ENCODE measurements at regions of chr1 and their contacts with region 1.

Region 1: GRCh38 chr1:158035976-158036583 is 42.6 kb downstream of the KIRREL1 start:
- DNase-seq: peak; percentile 56
- H3K4me3 Mint-ChIP-seq: no peak overlapping the region
- H3K27ac Mint-ChIP-seq: no peak overlapping the region
- H3K4me1 Mint-ChIP-seq: no peaks in the 10 kb centered on the region
- H3K27me3 Mint-ChIP-seq: no peaks in the 10 kb centered on the region

Region 2: DNA sequence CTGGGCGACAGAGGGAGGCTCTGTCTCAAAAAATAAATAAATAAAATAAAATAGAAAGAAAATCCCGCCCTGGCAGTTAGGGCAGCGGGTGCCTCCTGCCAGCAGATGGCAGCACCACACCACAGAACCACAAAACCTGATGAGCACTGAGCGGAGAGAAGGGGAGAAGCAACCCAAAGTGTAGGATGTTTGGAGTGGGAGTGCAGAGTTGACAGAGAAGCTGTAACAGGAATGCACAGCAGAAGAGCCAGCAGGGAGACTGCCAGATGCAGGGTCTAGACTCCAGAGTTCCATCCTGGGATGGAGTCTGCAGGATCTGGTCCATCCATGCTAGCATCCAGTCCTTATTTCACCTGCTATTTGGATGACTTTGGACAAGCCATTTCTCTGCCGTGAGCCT is 72.4 kb before region 1 on chr1:
- intact Hi-C with region 1: loop called (anchors 5 kb)
- DNase-seq: peak; percentile 83
- H3K4me3 Mint-ChIP-seq: no peak overlapping the region
- H3K27ac Mint-ChIP-seq: no peak overlapping the region
- H3K4me1 Mint-ChIP-seq: no peaks in the 10 kb centered on the region
- H3K27me3 Mint-ChIP-seq: peaks cover 3% of the 10 kb centered on the region

Region 3: DNA sequence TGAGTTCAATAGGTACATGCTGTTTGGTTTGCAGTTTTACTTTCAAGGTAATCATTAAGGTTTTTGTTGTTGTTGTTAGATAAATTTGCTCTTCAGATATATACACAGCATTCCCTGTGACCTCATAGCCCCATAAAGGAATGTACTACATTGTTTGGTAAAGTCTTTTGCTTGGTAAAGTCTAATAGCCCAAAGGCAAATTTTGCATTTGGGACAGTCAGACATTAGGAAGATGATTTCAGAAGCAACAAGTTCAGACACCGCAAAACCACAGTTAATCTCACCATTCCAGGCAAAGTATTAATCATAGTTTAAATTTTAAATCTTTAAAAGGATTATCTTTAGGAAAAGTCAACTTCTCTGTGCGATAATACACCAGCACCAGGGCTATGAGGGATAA is 862.6 kb after region 1 on chr1:
- intact Hi-C with region 1: no loop called
- DNase-seq: no peak
- H3K4me3 Mint-ChIP-seq: no peak overlapping the region
- H3K27ac Mint-ChIP-seq: no peak overlapping the region
- H3K4me1 Mint-ChIP-seq: no peaks in the 10 kb centered on the region
- H3K27me3 Mint-ChIP-seq: peaks cover 20% of the 10 kb centered on the region

Measured in activated CD4-positive, alpha-beta T cell treated with anti-CD3 and anti-CD28 coated beads, Interleukin-2, amount 10 ng/mL, durations not matched to agents 24 days and 14 days (primary cell).